Activated T-helper 1 cell treated with anti-CD3 and anti-CD28 coated beads, Interleukin-12 subunit alpha, Interleukin-12 subunit beta, Interleukin-2, Interleukin-4 antibody, amounts not matched to agents 30 ng/mL and 10 ng/mL and 1 ng/mL, durations not matched to agents 14 hours and 24 hours and 36 hours (primary cell): ENCODE measurements at regions of chr2 and their contacts with region 1.

Region 1: GRCh38 chr2:237674731-237675276 is 47.4 kb downstream of the LRRFIP1 start:
- DNase-seq: peak; percentile 80
- H3K4me3 Mint-ChIP-seq: peak overlapping the region; percentile 75
- H3K27ac Mint-ChIP-seq: peak overlapping the region; percentile 96
- H3K4me1 Mint-ChIP-seq: peaks cover 51% of the 10 kb centered on the region
- H3K27me3 Mint-ChIP-seq: peaks cover 3% of the 10 kb centered on the region

Region 2: GRCh38 chr2:237581751-237582746 is 92.8 kb before region 1 on chr2:
- intact Hi-C with region 1: loop called (anchors 5 kb)
- DNase-seq: no peak
- H3K4me3 Mint-ChIP-seq: no peak overlapping the region
- H3K27ac Mint-ChIP-seq: no peak overlapping the region
- H3K4me1 Mint-ChIP-seq: no peaks in the 10 kb centered on the region
- H3K27me3 Mint-ChIP-seq: peaks cover 4% of the 10 kb centered on the region

Region 3: DNA sequence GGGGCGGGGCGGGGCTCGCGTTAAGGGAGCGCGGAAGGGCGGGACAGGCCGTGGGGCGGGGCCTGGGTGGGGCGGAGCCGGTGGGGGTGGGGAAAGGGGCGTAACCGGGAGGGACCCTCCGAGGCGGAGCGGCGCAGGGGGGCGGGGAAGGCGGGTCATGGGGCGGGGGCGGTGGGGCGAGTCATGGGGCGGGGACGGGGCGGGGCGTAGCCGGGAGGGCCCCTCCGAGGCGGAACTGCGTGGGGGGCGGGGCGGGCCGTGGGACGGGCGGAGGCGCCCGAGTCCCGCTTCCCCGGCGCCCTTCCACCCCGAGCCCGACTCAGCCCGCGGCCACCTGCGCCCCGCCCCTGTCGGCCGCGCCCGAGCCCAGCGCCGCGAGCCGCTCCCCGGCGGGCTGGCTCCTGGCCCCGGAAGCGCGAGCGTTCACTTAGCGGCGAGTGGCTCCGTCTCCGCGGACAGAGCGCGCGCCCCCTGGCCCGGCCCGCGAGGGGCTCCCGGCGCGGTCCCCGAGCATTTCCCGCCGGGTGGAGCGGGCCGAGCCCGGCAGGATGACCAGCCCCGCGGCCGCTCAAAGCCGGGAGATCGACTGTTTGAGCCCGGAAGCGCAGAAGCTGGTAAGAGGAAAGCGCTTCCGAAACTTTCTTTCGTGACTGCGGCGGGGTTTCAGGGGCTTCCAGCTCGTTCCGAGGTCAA is 17.2 kb after region 1 on chr2:
- intact Hi-C with region 1: loop called (anchors 1 kb)
- DNase-seq: peak; percentile 91
- H3K4me3 Mint-ChIP-seq: peak overlapping the region; percentile 99
- H3K27ac Mint-ChIP-seq: peak overlapping the region; percentile 98
- H3K4me1 Mint-ChIP-seq: peaks cover 67% of the 10 kb centered on the region
- H3K27me3 Mint-ChIP-seq: no peaks in the 10 kb centered on the region

Region 4: DNA sequence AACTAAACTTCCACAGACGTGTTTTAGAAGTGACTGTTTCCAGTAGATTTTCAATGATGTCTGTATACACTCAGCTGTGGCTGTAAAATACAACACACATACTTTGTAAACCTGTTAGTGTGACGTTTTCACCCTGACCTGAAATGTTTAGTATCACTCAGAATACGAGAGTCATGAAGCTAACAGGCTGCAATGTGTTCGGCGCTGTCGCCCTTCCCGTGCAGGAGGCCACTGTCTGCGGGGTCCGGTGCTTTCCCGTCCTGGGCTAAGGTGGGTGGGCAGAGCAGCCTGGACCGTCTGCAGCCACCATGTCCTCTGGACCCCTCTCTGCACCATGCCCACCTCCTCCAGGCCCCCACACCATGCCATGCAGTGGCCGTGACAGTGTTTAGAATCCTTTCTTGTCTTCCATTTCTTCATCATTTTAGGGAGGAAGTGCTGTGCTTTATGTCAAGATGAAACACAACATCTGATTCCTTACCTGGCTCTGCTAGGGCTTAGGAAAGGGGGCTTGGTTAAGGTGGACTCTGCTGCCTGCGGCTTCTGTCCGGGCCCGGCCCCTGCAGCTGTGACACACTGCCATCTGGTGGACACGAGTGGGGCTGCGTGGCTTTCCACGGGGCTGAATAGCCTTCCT is 69.9 kb after region 1 on chr2:
- intact Hi-C with region 1: loop called (anchors 1 kb)
- DNase-seq: peak; percentile 62
- H3K4me3 Mint-ChIP-seq: no peak overlapping the region
- H3K27ac Mint-ChIP-seq: peak overlapping the region; percentile 85
- H3K4me1 Mint-ChIP-seq: peaks cover 33% of the 10 kb centered on the region
- H3K27me3 Mint-ChIP-seq: no peaks in the 10 kb centered on the region

Region 5: GRCh38 chr2:237774802-237775553 is 100.2 kb after region 1 on chr2:
- intact Hi-C with region 1: loop called (anchors 1 kb)
- DNase-seq: peak; percentile 24
- H3K4me3 Mint-ChIP-seq: no peak overlapping the region
- H3K27ac Mint-ChIP-seq: no peak overlapping the region
- H3K4me1 Mint-ChIP-seq: no peaks in the 10 kb centered on the region
- H3K27me3 Mint-ChIP-seq: no peaks in the 10 kb centered on the region

Region 6: DNA sequence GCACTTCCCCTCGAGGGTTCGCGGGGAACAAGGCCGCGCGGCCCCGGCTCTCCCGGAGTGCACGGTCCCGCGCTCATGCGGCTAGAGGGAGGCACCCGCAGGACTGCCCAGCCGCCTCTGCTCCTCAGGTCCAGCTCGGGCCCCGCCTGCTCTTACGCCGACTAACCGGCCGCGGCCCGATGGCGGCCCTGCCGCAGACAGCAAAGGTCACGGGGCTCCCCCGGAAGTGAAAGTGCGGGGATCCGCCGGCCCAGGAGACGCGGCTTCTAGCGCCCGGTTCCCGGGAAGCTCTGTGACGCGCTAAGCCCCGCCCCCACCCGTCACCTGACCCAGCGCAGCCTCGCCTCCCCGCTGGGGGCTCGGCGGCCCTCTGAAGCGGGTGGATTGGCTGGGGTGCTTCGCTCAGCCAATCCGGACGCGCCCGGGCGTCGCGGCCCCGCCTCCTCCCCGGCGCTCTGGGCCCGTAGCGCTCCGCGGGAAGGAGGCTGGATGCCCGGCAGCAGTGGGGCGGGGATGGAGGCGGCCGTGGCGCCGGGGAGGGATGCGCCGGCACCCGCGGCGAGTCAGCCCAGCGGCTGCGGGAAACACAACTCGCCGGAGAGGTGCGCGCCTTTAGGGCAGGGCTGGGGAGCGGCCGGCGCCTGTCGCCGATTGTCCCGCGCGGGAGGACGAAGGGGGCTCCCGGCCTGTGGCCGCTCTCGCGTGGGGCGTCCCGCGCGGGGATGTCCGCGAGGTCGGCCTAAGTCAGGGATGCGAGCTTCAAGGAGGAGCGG is 385.9 kb after region 1 on chr2 and contains the start of gene SCLY:
- intact Hi-C with region 1: loop called (anchors 2 kb)
- DNase-seq: peak; percentile 93
- H3K4me3 Mint-ChIP-seq: peak within 1 kb of the TSS; percentile 90
- H3K27ac Mint-ChIP-seq: peak within 1 kb of the TSS; percentile 91
- H3K4me1 Mint-ChIP-seq: peaks cover 62% of the 10 kb centered on the region
- H3K27me3 Mint-ChIP-seq: peaks cover 7% of the 10 kb centered on the region
- total RNA-seq, gene SCLY: 109 and 119 TPM in 2 replicates